B cell (primary cell): ENCODE measurements at regions of chr16 and their contacts with region 1.

Region 1: DNA sequence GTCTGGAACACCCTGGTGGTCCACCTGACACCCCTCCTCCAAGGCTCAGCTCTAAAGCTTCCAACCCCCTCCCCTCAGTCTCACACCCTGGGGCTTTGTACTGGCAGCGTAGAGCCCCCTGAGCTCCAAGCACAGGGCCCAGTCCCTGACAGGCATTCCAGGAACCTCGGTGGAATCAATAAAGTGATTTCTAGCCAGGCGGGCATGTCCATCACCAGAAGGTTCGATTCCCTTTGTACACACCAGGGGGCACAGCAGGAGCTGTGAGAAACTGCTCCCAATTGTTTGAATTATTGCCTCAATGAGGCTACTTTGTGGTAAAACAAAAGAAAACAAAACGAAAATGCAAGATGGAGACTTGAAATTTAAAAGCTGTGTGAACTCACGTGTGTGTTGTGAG is 51.8 kb downstream of the SMPD3 start:
- DNase-seq: peak; percentile 58
- ATAC-seq: no peak
- H3K4me3 ChIP-seq: no peak overlapping the region
- H3K4me3 Mint-ChIP-seq: no peak overlapping the region
- H3K27ac ChIP-seq: no peak overlapping the region
- H3K27ac Mint-ChIP-seq: no peak overlapping the region
- H3K4me1 ChIP-seq: no peaks in the 10 kb centered on the region
- H3K4me1 Mint-ChIP-seq: peaks cover 2% of the 10 kb centered on the region
- H3K27me3 ChIP-seq: no peaks in the 10 kb centered on the region
- H3K27me3 Mint-ChIP-seq: no peaks in the 10 kb centered on the region
- CTCF ChIP-seq: peak; percentile 61

Region 2: DNA sequence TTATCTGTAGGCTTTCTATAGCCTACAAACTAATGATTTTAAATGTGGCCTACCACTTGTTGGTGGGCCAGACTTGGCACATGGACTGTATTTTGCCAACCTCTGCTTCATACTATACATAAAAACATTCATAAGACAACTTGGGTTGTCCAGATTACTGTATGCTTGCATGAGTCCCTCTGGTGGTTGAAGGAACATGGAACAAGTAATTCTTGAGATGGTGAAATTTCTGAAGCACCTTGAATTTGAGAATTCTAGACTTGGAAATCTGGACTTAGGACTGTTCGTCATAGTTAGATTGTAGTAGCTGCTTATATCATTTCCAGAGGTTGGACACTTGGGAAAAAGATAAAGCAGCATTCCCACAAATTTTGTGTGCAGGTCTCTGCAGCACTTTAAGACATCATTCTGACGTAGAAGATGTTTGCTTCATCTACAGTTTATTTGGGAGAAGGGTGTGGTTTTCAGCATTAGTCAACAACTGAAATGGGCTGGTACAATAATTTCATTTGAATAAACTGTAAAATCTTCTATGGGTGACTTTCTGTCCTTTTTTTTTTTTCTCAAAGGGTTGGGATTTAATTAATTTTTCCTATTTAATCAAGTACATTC is 280.1 kb before region 1 on chr16:
- CTCF ChIA-PET with region 1: no interaction called
- POLR2A ChIA-PET with region 1: no interaction called
- intact Hi-C with region 1: no loop called
- DNase-seq: peak; percentile 54
- ATAC-seq: peak; percentile 31
- H3K4me3 ChIP-seq: no peak overlapping the region
- H3K4me3 Mint-ChIP-seq: no peak overlapping the region
- H3K27ac ChIP-seq: peak overlapping the region in 1 of 2 donors; percentile 73
- H3K27ac Mint-ChIP-seq: peak overlapping the region; percentile 67
- H3K4me1 ChIP-seq: peaks cover 64 to 73% of the 10 kb centered on the region in 2 donors
- H3K4me1 Mint-ChIP-seq: peaks cover 74% of the 10 kb centered on the region
- H3K27me3 ChIP-seq: no peaks in the 10 kb centered on the region
- H3K27me3 Mint-ChIP-seq: no peaks in the 10 kb centered on the region
- CTCF ChIP-seq: peak; percentile 77

Region 3: GRCh38 chr16:68512183-68512582 is 115.7 kb after region 1 on chr16:
- CTCF ChIA-PET with region 1: interaction called, 28 read pairs
- POLR2A ChIA-PET with region 1: interaction called, 3 read pairs
- intact Hi-C with region 1: no loop called
- DNase-seq: no peak
- ATAC-seq: no peak
- H3K4me3 ChIP-seq: no peak overlapping the region
- H3K4me3 Mint-ChIP-seq: no peak overlapping the region
- H3K27ac ChIP-seq: no peak overlapping the region
- H3K27ac Mint-ChIP-seq: peak overlapping the region; percentile 32
- H3K4me1 ChIP-seq: peaks cover 5 to 9% of the 10 kb centered on the region in 2 donors
- H3K4me1 Mint-ChIP-seq: peaks cover 4% of the 10 kb centered on the region
- H3K27me3 ChIP-seq: peaks cover 0 to 8% (median 3%) of the 10 kb centered on the region in 4 experiments
- H3K27me3 Mint-ChIP-seq: no peaks in the 10 kb centered on the region
- CTCF ChIP-seq: no peak